ENCODE measurements at regions of chr4 and their contacts with region 1.

Region 1: GRCh38 chr4:110193822-110194761 is 4.3 kb downstream of the ELOVL6 start:
- DNase-seq: peak; percentile 35 to 88 (median 80)
- ATAC-seq: peak; percentile 90
- H3K4me3 ChIP-seq: no peak overlapping the region
- H3K4me3 Mint-ChIP-seq: peak overlapping the region in 9 of 10 donors; percentile 19 to 70 (median 49)
- H3K27ac ChIP-seq: peak overlapping the region; percentile 59
- H3K27ac Mint-ChIP-seq: peak overlapping the region; percentile 68 to 97 (median 92)
- H3K4me1 ChIP-seq: peaks cover 0 to 11% of the 10 kb centered on the region in 2 donors
- H3K4me1 Mint-ChIP-seq: peaks cover 16 to 51% (median 29%) of the 10 kb centered on the region in 7 donors
- H3K27me3 ChIP-seq: no peaks in the 10 kb centered on the region
- H3K27me3 Mint-ChIP-seq: no peaks in the 10 kb centered on the region

Region 2: DNA sequence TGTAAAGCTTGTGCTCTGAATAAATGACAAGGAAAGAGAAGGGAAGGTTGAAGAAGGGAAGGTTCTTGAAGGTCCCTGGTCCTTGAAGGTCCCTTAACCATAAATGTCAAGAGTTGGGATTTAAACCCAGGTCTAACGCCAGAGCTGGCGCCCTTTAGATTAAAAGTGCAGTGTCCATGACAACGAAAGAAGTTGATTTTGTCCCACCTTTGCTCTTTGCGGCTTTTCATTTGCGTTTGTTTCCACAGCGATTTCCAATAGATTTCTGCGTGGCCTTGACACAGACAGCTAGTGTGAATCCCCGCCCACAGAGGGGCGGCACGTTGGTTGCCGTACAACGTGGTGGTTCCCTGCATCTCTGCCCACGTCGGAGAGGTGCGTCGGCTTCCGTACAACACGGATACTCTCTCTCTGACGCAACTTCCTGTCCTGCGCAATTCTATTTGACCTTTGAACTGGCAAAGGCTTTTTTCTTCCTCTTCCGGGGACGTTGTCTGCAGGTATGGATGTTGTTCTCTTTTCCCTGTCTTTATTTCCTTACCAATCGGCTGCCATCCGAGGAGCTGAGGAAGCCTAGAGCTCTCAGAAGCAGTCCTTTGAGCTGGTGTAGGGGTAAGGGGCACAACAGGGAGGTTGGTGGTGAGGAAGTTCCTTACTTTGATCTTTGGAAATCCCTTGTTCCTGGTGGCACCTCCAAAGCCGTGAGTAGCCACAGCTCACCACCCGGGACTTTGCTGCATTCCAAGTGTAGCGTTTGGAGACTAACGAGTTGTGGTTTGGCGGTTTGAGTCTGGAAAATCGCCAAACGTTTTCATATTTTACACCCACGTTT is 1573.8 kb before region 1 on chr4 and contains the start of gene RPL34:
- CTCF ChIA-PET with region 1: no interaction called
- POLR2A ChIA-PET with region 1: no interaction called
- intact Hi-C with region 1: loop called in 1 of 2 experiments (anchors 5 kb)
- DNase-seq: peak; percentile 85 to 99 (median 96)
- ATAC-seq: peak; percentile 100
- H3K4me3 ChIP-seq: peak within 1 kb of the TSS; percentile 98
- H3K4me3 Mint-ChIP-seq: peak within 1 kb of the TSS; percentile 87 to 99 (median 96)
- H3K27ac ChIP-seq: peak within 1 kb of the TSS; percentile 90
- H3K27ac Mint-ChIP-seq: peak within 1 kb of the TSS; percentile 95 to 99 (median 97)
- H3K4me1 ChIP-seq: peaks cover 29 to 30% of the 10 kb centered on the region in 2 donors
- H3K4me1 Mint-ChIP-seq: peaks cover 33 to 81% (median 66%) of the 10 kb centered on the region in 7 donors
- H3K27me3 ChIP-seq: no peaks in the 10 kb centered on the region
- H3K27me3 Mint-ChIP-seq: peaks cover 0 to 3% (median 0%) of the 10 kb centered on the region in 5 donors
- total RNA-seq, gene RPL34: 1,411 to 3,442 (median 3,215) TPM

Region 3: GRCh38 chr4:109559983-109560686 is 634.0 kb before region 1 on chr4 and contains the start of gene MCUB:
- CTCF ChIA-PET with region 1: no interaction called
- POLR2A ChIA-PET with region 1: no interaction called
- intact Hi-C with region 1: loop called (anchors 1 to 10 kb)
- DNase-seq: peak; percentile 80 to 95 (median 93)
- ATAC-seq: peak; percentile 96
- H3K4me3 ChIP-seq: peak within 1 kb of the TSS; percentile 83
- H3K4me3 Mint-ChIP-seq: peak within 1 kb of the TSS; percentile 89 to 100 (median 98)
- H3K27ac ChIP-seq: peak within 1 kb of the TSS; percentile 96
- H3K27ac Mint-ChIP-seq: peak within 1 kb of the TSS; percentile 90 to 100 (median 98)
- H3K4me1 ChIP-seq: peaks cover 25 to 41% of the 10 kb centered on the region in 2 donors
- H3K4me1 Mint-ChIP-seq: peaks cover 34 to 76% (median 58%) of the 10 kb centered on the region in 7 donors
- H3K27me3 ChIP-seq: no peaks in the 10 kb centered on the region
- H3K27me3 Mint-ChIP-seq: no peaks in the 10 kb centered on the region
- total RNA-seq, gene MCUB: 83.4 to 177 (median 114) TPM

Region 4: DNA sequence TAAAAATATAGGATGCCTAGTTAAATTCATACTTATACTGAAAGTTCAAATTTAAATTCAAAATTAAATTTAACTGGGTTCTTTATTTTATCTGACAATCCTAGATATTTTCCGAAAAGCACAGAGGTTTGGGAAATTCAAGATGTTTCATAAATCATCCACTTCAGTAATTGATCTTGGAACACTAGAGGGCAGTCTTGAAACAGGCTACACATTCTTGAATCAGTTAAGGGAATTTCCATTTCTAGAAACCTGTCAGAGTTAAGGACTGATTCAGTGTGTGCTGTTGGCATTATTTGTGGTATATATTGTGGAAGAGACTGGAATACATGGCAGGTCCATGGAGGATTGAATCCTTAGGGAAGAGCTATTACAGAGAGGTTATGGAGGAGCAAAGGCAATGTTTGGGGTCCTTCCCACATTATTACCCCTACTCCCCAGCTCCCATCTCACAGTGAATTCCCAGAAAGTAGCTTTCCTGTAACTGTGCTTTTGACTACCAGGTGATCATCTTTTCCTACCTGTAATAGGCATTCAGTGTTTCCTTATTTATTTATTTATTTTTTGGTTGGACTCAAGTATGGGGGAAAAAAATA is 188.5 kb before region 1 on chr4:
- CTCF ChIA-PET with region 1: interaction called, 4 read pairs
- POLR2A ChIA-PET with region 1: no interaction called
- intact Hi-C with region 1: loop called in 1 of 2 experiments (anchors 5 kb)
- DNase-seq: peak in 7 of 9 donors; percentile 26 to 62 (median 51)
- ATAC-seq: peak; percentile 86
- H3K4me3 ChIP-seq: no peak overlapping the region
- H3K4me3 Mint-ChIP-seq: no peak overlapping the region
- H3K27ac ChIP-seq: no peak overlapping the region
- H3K27ac Mint-ChIP-seq: no peak overlapping the region
- H3K4me1 ChIP-seq: no peaks in the 10 kb centered on the region
- H3K4me1 Mint-ChIP-seq: peaks cover 0 to 32% (median 0%) of the 10 kb centered on the region in 7 donors
- H3K27me3 ChIP-seq: no peaks in the 10 kb centered on the region
- H3K27me3 Mint-ChIP-seq: peaks cover 0 to 25% (median 6%) of the 10 kb centered on the region in 5 donors

Region 5: DNA sequence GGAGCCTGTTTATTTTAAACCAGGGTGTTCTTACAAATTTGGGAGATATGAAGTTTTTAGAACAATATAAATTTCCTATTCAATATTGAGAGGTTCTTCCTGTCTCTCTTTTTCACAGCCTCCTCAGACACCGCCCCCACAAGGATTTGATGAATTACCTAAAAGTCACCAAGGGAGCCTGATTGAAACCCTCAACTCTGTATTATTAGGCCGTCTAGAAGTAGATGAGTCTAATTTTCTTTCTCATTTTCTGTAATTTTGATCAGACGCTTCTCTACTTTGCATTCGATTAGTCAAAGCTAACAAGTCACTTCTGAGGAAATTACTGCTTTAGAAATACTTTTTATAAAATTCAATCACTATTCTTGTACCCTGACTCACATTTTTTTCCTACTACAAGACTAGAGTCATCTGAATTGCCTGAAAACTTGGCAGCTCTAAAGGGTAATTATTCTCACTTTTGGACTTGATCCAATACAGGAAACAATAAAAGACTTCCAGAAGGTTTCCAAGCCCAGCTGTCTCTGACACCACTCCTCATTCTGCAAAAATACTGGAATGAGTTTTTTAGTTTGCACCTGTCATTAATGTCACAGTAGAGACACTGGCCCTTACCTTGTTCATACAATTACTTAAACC is 106.9 kb before region 1 on chr4:
- CTCF ChIA-PET with region 1: no interaction called
- POLR2A ChIA-PET with region 1: no interaction called
- intact Hi-C with region 1: loop called (anchors 1 to 10 kb)
- DNase-seq: no peak
- ATAC-seq: no peak
- H3K4me3 ChIP-seq: no peak overlapping the region
- H3K4me3 Mint-ChIP-seq: no peak overlapping the region
- H3K27ac ChIP-seq: no peak overlapping the region
- H3K27ac Mint-ChIP-seq: peak overlapping the region in 1 of 9 donors; percentile 48
- H3K4me1 ChIP-seq: peaks cover 0 to 11% of the 10 kb centered on the region in 2 donors
- H3K4me1 Mint-ChIP-seq: peaks cover 13 to 62% (median 29%) of the 10 kb centered on the region in 7 donors
- H3K27me3 ChIP-seq: no peaks in the 10 kb centered on the region
- H3K27me3 Mint-ChIP-seq: no peaks in the 10 kb centered on the region

Region 6: DNA sequence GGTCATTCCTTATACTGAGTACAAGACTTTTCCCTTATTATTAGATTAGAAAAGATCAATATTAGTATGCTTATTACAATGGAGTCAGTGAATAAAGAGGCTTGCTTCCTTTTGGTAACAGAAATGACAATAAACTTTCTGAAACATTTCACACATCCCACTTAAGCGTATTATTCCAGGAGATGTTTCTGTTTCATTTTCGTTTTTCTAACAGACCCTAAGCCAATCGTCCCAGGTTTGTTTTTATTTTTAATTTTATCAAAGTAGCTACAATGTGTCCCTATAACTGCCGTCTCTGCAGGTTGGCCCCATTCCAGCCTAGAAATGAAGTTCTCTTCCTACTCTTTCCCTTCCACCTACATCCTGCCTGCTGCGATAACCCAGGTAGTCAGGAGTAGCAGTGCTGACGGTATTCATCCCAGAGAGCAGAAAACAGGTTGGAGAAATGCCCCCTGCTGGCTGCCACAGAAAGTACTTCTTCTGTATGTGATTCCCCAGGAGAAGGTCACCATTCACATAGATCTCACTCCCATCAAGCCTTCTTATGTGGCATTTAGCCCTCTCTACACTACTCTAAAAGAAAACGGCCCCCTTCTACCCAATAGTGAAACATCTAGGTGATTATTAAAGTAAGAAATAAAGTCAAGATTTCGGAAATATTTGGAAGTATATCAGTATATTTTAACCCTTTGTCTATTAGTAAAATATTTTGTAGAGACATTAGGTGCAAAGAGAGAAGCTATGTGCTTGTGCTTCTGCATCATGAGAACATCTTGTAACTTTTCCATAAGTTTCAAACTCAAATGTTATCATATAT is 322.2 kb after region 1 on chr4:
- CTCF ChIA-PET with region 1: no interaction called
- POLR2A ChIA-PET with region 1: no interaction called
- intact Hi-C with region 1: loop called (anchors 5 kb)
- DNase-seq: peak; percentile 29 to 67 (median 61)
- ATAC-seq: peak; percentile 91
- H3K4me3 ChIP-seq: peak overlapping the region; percentile 66
- H3K4me3 Mint-ChIP-seq: peak overlapping the region; percentile 84 to 99 (median 91)
- H3K27ac ChIP-seq: peak overlapping the region; percentile 58
- H3K27ac Mint-ChIP-seq: peak overlapping the region in 8 of 9 donors; percentile 7 to 79 (median 29)
- H3K4me1 ChIP-seq: peaks cover 0 to 5% of the 10 kb centered on the region in 2 donors
- H3K4me1 Mint-ChIP-seq: peaks cover 7 to 16% (median 11%) of the 10 kb centered on the region in 7 donors
- H3K27me3 ChIP-seq: no peaks in the 10 kb centered on the region
- H3K27me3 Mint-ChIP-seq: peaks cover 1 to 13% (median 5%) of the 10 kb centered on the region in 5 donors

Region 7: GRCh38 chr4:110550260-110550659 is 356.2 kb after region 1 on chr4:
- CTCF ChIA-PET with region 1: no interaction called
- POLR2A ChIA-PET with region 1: no interaction called
- intact Hi-C with region 1: no loop called
- DNase-seq: no peak
- ATAC-seq: no peak
- H3K4me3 ChIP-seq: no peak overlapping the region
- H3K4me3 Mint-ChIP-seq: no peak overlapping the region
- H3K27ac ChIP-seq: no peak overlapping the region
- H3K27ac Mint-ChIP-seq: no peak overlapping the region
- H3K4me1 ChIP-seq: no peaks in the 10 kb centered on the region
- H3K4me1 Mint-ChIP-seq: no peaks in the 10 kb centered on the region
- H3K27me3 ChIP-seq: no peaks in the 10 kb centered on the region
- H3K27me3 Mint-ChIP-seq: peaks cover 19 to 31% (median 20%) of the 10 kb centered on the region in 5 donors